Activated T-helper 2 cell treated with anti-CD3 and anti-CD28 coated beads, Interferon-gamma antibody, Interleukin-2, Interleukin-4, amounts not matched to agents 10 μg/mL and 5 μg/mL and 100 μg/mL, durations not matched to agents 14 hours and 24 hours and 36 hours (primary cell): ENCODE measurements at regions of chr11 and their contacts with region 1.

Region 1: DNA sequence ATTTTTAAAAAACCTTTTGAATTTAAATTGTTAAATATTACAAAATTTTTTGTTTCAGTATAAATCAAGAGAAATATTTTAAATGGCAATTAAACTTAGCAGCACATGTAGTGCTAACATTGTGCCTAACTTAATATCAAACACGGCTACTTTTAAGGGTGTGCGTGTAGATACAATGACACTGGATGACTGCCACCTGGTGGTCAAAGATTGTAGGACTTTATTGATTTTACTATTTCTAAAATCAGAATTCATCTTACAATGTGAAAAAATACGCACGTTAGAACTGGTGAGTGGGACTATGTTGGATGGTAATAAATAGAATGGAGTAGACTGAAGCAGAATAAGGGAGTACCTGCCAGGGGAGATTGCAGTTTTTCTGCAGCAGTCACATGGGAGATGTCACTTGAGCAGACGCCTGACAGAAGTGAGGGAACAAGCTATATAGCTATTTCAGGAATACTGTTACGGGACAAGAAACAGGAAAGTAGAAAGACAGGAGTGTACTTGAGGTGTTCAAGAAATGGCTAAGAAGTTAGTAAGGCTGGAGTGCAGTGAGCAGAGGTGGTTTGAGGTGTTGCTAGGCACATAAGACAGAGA is 52.9 kb downstream of the UVRAG start:
- DNase-seq: no peak
- H3K4me3 Mint-ChIP-seq: no peak overlapping the region
- H3K27ac Mint-ChIP-seq: no peak overlapping the region
- H3K4me1 Mint-ChIP-seq: peaks cover 19% of the 10 kb centered on the region
- H3K27me3 Mint-ChIP-seq: no peaks in the 10 kb centered on the region

Region 2: DNA sequence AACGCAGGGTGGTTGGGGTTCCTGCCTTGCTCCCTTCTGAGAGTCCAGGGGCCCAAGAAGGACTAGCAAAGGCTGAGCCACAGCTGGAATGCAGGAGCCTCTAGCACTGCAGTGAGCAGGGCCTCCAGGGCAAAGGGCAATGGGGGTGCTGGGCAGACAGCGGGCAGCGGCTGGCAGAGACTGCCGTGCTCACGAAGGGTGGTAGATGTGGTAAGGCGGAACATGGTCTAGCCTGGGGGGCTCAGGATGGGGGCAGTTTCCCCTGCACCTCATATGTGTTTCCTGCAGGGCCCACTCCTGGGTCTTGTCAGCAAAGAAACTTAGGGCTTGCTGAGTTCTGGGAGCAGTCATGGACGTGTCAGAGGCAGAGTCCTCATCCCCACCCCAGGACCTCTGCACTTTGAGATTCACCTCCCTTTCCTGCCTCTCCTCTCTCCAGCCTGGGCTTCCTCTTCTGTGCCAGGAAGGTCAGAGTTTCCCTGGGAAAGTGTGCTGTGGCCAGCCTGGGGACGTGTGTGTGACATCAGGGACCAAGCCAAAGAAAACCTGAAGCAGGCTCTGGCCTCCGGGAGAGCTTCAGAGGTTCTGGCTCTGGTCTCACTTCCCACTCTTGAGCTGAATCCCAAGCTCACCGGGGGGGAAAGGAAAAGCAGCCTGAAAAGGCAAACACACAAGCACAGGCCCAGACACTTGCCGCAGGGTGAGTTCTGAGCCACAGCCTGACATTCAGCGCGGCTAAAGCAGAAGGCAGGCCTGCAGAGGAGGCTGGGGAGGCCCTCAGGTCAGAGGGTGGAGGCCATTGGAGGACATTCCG is 145.8 kb before region 1 on chr11:
- intact Hi-C with region 1: loop called (anchors 1 kb)
- DNase-seq: no peak
- H3K4me3 Mint-ChIP-seq: no peak overlapping the region
- H3K27ac Mint-ChIP-seq: no peak overlapping the region
- H3K4me1 Mint-ChIP-seq: no peaks in the 10 kb centered on the region
- H3K27me3 Mint-ChIP-seq: peaks cover 2% of the 10 kb centered on the region

Region 3: DNA sequence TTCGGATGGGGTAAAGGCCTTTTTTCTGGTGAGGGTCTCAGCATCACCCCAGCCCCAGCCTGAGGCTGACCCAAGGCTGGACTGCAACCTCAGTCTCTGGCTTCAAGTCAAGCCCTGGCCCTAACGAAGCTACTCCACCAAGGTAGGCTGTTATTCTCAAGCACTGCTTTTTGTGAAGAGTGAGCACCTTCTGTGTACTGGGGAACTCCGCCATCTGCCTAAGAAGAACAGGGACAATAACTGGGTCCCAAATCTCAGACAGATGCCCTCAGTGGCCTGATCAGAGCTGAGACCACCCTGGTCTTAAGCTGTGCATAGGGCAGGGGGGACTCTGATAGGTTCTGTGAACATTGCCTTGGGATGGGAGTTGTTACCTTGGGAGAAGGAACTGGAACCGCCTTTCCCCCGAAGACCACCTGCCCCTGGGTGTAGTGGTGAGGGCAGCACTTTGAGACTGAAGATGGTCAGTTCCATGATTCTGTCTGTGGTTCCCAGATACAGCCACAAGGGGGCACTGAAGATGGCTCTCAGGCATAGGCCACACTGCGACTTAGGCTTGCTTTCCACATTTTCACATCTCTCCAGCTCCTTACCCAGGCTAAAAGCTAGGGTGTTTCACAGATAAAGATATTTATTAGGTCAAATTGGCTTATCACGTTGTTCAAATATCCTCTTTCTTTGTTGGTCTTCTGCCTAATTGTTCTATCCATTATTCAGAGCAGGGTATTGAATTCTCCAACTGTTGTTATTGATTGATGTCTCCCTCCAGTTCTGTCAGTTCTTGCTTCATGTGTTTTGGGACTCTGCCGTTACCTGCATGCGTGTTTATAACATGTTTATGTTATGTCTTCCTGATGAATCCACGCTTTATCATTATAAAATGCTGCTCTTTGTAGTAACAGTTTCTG is 64.7 kb before region 1 on chr11:
- intact Hi-C with region 1: loop called (anchors 1 kb)
- DNase-seq: peak; percentile 52
- H3K4me3 Mint-ChIP-seq: no peak overlapping the region
- H3K27ac Mint-ChIP-seq: no peak overlapping the region
- H3K4me1 Mint-ChIP-seq: peaks cover 22% of the 10 kb centered on the region
- H3K27me3 Mint-ChIP-seq: peaks cover 4% of the 10 kb centered on the region

Region 4: DNA sequence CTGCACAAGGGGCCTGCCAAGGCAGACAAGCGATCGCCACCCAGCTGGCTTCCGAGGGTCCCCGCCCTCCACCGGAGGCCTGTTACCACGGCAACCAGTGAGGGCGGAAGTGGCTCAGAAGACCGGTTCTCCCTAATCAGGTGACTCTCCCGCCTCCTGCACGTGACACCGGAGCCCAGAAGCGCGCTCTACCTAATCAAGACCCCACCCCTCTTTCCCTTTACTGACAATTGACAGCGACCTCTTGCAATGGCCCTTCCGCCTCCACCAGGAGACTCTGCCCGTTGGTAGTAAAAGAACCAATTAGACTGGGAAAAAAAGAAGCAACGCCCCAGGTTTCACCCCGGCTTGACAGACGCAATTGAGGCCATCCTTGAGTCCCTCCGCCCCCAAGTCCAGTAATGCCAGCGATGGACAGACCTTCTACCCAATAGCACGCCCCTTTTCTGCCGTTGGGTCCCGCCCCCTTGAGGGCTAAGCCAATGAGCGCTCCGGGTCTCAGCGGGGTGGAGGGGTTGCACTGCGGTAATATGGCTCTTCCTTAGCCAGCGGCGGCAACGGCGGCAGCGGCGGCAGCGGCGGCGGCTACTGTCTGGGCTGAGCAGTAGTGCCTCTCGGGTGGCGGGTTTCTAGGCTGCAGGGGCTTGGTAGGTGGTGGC is 53.1 kb before region 1 on chr11 and contains the start of gene UVRAG:
- intact Hi-C with region 1: loop called (anchors 5 kb)
- DNase-seq: peak; percentile 98
- H3K4me3 Mint-ChIP-seq: no peak within 1 kb of the TSS
- H3K27ac Mint-ChIP-seq: peak within 1 kb of the TSS; percentile 92
- H3K4me1 Mint-ChIP-seq: peaks cover 13% of the 10 kb centered on the region
- H3K27me3 Mint-ChIP-seq: no peaks in the 10 kb centered on the region
- total RNA-seq, gene UVRAG: 23.3 and 23.5 TPM in 2 replicates